ENCODE measurements at regions of chr6 and their contacts with region 1.

Region 1: GRCh38 chr6:31546962-31547726 is at the start of gene NFKBIL1:
- DNase-seq: peak; percentile 74 to 95 (median 84)
- ATAC-seq: peak; percentile 78
- H3K4me3 ChIP-seq: peak within 1 kb of the TSS; percentile 62
- H3K4me3 Mint-ChIP-seq: peak within 1 kb of the TSS; percentile 86
- H3K27ac ChIP-seq: peak within 1 kb of the TSS; percentile 72 to 89
- H3K27ac Mint-ChIP-seq: peak within 1 kb of the TSS; percentile 84
- H3K4me1 ChIP-seq: peaks cover 47% of the 10 kb centered on the region
- H3K4me1 Mint-ChIP-seq: peaks cover 41% of the 10 kb centered on the region
- H3K27me3 ChIP-seq: no peaks in the 10 kb centered on the region
- H3K27me3 Mint-ChIP-seq: no peaks in the 10 kb centered on the region
- CTCF ChIP-seq: peak; percentile 21
- total RNA-seq, gene NFKBIL1: 7.6 to 9.3 TPM

Region 2: DNA sequence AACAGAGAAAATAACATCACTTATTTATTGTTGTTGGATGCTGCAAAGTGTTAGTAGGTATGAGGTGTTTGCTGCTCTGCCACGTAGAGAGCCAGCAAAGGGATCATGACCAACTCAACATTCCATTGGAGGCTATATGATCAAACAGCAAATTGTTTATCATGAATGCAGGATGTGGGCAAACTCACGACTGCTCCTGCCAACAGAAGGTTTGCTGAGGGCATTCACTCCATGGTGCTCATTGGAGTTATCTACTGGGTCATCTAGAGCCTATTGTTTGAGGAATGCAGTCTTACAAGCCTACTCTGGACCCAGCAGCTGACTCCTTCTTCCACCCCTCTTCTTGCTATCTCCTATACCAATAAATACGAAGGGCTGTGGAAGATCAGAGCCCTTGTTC is 37.2 kb before region 1 on chr6:
- CTCF ChIA-PET with region 1: no interaction called
- POLR2A ChIA-PET with region 1: no interaction called
- intact Hi-C with region 1: no loop called
- DNase-seq: no peak
- ATAC-seq: no peak
- H3K4me3 ChIP-seq: no peak overlapping the region
- H3K4me3 Mint-ChIP-seq: no peak overlapping the region
- H3K27ac ChIP-seq: no peak overlapping the region
- H3K27ac Mint-ChIP-seq: no peak overlapping the region
- H3K4me1 ChIP-seq: no peaks in the 10 kb centered on the region
- H3K4me1 Mint-ChIP-seq: peaks cover 6% of the 10 kb centered on the region
- H3K27me3 ChIP-seq: no peaks in the 10 kb centered on the region
- H3K27me3 Mint-ChIP-seq: no peaks in the 10 kb centered on the region
- CTCF ChIP-seq: no peak

Region 3: GRCh38 chr6:31559958-31560696 is 13.0 kb after region 1 on chr6:
- CTCF ChIA-PET with region 1: interaction called, 8 read pairs
- POLR2A ChIA-PET with region 1: interaction called, 10 read pairs
- intact Hi-C with region 1: no loop called
- DNase-seq: peak in 7 of 14 experiments; percentile 29 to 81 (median 65)
- ATAC-seq: peak; percentile 58
- H3K4me3 ChIP-seq: peak overlapping the region; percentile 44
- H3K4me3 Mint-ChIP-seq: peak overlapping the region; percentile 82
- H3K27ac ChIP-seq: peak overlapping the region; percentile 63 to 74
- H3K27ac Mint-ChIP-seq: peak overlapping the region; percentile 90
- H3K4me1 ChIP-seq: peaks cover 72% of the 10 kb centered on the region
- H3K4me1 Mint-ChIP-seq: peaks cover 62% of the 10 kb centered on the region
- H3K27me3 ChIP-seq: no peaks in the 10 kb centered on the region
- H3K27me3 Mint-ChIP-seq: no peaks in the 10 kb centered on the region
- CTCF ChIP-seq: no peak

Region 4: DNA sequence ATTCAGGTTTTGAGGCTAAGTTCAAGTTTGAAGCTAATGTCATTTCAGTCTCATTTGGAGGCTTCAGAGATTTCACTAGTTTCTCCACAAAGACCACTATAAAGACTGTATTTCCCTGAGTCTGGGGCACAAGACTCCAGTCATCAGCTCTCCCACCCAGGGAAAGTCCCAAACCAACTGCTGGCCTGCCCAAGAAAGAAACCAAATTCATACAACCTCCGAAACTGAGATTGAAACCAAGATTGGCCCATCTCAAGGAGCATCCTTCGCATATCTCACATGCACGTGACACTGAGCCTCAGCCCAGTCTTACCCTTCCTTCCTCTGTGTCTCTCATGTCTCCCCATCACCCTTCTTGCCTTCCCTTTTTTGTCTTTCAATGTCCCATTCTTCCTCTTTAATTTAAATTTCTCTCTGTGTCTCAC is 21.4 kb after region 1 on chr6:
- CTCF ChIA-PET with region 1: interaction called, 169 read pairs
- POLR2A ChIA-PET with region 1: interaction called, 220 read pairs
- intact Hi-C with region 1: no loop called
- DNase-seq: peak in 9 of 14 experiments; percentile 31 to 95 (median 61)
- ATAC-seq: peak; percentile 60
- H3K4me3 ChIP-seq: no peak overlapping the region
- H3K4me3 Mint-ChIP-seq: peak overlapping the region; percentile 65
- H3K27ac ChIP-seq: peak overlapping the region; percentile 78 to 88
- H3K27ac Mint-ChIP-seq: peak overlapping the region; percentile 95
- H3K4me1 ChIP-seq: peaks cover 83% of the 10 kb centered on the region
- H3K4me1 Mint-ChIP-seq: peaks cover 81% of the 10 kb centered on the region
- H3K27me3 ChIP-seq: no peaks in the 10 kb centered on the region
- H3K27me3 Mint-ChIP-seq: no peaks in the 10 kb centered on the region
- CTCF ChIP-seq: no peak

Region 5: DNA sequence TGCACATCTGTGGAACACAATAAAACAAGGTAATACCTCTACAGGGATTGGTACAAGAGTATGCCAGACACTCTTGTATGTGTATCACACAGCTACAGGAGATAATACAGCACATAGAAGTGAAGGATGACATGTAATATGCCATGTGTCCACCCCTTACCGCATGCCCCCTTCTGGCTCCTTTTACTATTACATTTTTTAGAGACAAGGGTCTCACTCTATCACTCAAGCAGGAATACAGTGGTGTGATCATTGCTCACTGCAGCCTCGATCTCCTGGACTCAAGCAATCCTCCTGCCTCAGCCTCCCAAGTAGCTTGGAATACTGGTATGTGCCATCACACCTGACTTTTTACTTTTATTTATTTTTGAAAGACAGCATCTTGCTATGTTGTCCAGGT is 49.9 kb after region 1 on chr6:
- CTCF ChIA-PET with region 1: interaction called, 284 read pairs
- POLR2A ChIA-PET with region 1: interaction called, 119 read pairs
- intact Hi-C with region 1: loop called (anchors 1 kb)
- DNase-seq: peak in 9 of 14 experiments; percentile 26 to 85 (median 45)
- ATAC-seq: peak; percentile 89
- H3K4me3 ChIP-seq: no peak overlapping the region
- H3K4me3 Mint-ChIP-seq: peak overlapping the region; percentile 7
- H3K27ac ChIP-seq: no peak overlapping the region
- H3K27ac Mint-ChIP-seq: peak overlapping the region; percentile 70
- H3K4me1 ChIP-seq: peaks cover 60% of the 10 kb centered on the region
- H3K4me1 Mint-ChIP-seq: peaks cover 40% of the 10 kb centered on the region
- H3K27me3 ChIP-seq: no peaks in the 10 kb centered on the region
- H3K27me3 Mint-ChIP-seq: no peaks in the 10 kb centered on the region
- CTCF ChIP-seq: peak; percentile 76

Region 6: DNA sequence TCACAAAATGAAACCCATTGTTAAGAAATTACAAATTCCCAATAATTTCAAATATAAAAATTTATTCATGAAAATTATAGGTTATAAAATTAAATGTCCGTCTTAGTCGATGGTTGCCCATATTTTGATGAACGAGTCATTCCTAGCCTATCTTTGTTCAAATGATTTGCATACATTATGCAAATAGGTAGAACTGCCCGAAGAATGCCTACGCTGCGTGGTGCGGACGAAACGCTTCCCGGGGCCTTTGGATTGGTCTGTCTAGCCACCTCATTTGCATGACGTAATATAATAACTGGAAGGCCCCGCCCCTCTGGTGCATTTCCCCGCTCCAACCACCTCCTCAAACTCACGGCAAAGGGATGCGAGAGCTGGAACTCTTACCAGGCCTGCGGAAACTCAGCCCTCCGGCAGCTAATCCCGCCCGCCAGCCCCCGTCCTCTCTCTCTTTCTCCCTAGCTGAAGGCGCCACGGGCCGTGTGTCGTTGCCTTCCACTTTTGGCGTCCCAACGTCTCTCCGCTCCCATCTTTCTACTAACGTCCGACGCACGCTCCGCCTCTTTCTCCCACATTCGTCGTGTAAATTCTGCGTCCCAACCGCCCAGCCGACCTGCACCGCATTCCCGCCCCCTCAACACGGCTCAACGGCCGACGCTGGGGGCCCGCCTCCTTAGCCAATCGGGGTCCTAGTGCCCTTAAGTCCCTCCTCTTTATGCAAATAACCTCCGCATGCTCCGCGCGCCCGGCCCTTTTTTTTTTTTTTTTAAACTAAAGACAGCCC is 72.9 kb after region 1 on chr6:
- CTCF ChIA-PET with region 1: interaction called, 4 read pairs
- POLR2A ChIA-PET with region 1: interaction called, 22 read pairs
- intact Hi-C with region 1: loop called in 1 of 2 experiments (anchors 2 kb)
- DNase-seq: peak; percentile 86 to 99 (median 95)
- ATAC-seq: peak; percentile 79
- H3K4me3 ChIP-seq: peak overlapping the region; percentile 74
- H3K4me3 Mint-ChIP-seq: peak overlapping the region; percentile 92
- H3K27ac ChIP-seq: peak overlapping the region; percentile 97 to 99
- H3K27ac Mint-ChIP-seq: peak overlapping the region; percentile 92
- H3K4me1 ChIP-seq: peaks cover 46% of the 10 kb centered on the region
- H3K4me1 Mint-ChIP-seq: peaks cover 52% of the 10 kb centered on the region
- H3K27me3 ChIP-seq: no peaks in the 10 kb centered on the region
- H3K27me3 Mint-ChIP-seq: no peaks in the 10 kb centered on the region
- CTCF ChIP-seq: no peak

Region 7: DNA sequence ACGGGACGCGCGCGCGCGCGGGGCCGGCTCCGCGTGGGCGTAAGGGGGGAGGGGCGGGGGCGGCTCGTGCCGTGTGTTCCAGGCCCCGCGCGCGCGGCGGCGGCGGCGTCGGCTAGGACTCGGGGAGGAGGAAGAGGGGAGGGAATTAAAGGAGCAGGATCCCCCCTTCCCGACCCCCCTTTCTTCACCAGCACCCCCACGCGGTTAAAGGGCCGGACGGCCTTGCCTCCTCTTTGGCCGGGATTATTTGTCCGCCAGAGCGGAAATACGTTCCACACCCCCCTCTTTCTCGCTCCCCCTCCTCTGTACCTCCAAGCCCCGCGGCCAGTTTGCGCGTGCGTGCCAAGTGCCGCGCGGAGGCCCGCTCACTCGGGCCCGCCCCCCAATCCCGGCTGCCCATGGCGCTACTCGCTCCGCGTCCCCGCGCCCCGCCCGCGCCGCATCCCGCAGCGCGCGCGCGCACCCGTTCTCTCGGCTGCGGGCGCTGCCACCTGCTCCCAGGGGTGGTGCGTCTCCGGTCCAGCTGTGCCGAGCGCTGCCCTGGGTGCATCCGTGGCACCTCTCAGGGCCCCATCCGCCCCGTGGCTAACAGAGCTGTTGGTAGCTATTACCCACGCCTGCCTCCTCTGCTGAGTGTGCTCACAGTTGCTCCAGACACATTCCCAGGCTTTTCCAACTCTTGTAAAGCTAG is 355.0 kb after region 1 on chr6 and contains the start of gene ZBTB12:
- CTCF ChIA-PET with region 1: no interaction called
- POLR2A ChIA-PET with region 1: no interaction called
- intact Hi-C with region 1: loop called in 1 of 2 experiments (anchors 5 kb)
- DNase-seq: peak; percentile 67 to 94 (median 84)
- ATAC-seq: peak; percentile 48
- H3K4me3 ChIP-seq: peak within 1 kb of the TSS; percentile 68
- H3K4me3 Mint-ChIP-seq: peak within 1 kb of the TSS; percentile 89
- H3K27ac ChIP-seq: peak within 1 kb of the TSS; percentile 13 to 72
- H3K27ac Mint-ChIP-seq: peak within 1 kb of the TSS; percentile 65
- H3K4me1 ChIP-seq: peaks cover 39% of the 10 kb centered on the region
- H3K4me1 Mint-ChIP-seq: peaks cover 35% of the 10 kb centered on the region
- H3K27me3 ChIP-seq: no peaks in the 10 kb centered on the region
- H3K27me3 Mint-ChIP-seq: no peaks in the 10 kb centered on the region
- CTCF ChIP-seq: no peak
- total RNA-seq, gene ZBTB12: 0.28 to 0.33 TPM

Measured in CD4-positive, alpha-beta T cell (primary cell).